Caco-2 (cell line): ENCODE measurements at regions of chr14 and their contacts with region 1.

Region 1: DNA sequence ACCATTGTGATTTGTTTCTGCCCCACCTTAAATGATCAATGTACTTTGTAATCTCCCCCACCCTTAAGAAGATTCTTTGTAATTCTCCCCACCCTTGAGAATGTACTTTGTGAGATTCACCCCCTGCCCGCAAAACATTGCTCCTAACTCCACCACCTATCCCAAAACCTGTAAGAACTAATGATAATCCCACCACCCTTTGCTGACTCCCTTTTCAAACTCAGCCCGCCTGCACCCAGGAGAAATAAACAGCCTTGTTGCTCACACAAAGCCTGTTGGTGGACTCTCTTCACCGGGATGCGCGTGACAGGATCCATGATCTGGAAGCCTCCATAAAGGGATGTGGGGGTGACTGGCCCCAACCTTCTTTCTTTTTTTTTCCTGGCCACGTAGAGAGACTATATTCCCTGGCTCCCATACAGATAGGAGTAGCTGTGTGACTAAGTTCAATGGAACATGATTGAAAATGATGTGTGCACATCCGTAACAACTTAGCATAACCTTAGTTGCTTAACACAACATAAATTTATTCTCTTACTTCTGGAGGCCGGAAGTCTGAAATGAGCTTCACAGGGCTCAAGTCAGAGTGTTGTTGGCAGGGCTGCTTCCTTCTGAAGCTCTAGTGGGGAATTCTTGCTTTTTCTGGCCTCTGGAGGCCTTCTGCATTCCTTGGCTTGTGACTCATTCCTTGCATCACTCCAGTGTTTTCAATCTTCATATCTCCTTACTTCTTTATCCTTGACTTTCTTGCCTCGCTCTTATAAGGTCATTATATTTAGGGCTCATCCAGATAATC is 20.7 kb upstream of the SNX6 start:
- DNase-seq: peak; percentile 74
- H3K4me3 ChIP-seq: no peak overlapping the region
- H3K4me3 Mint-ChIP-seq: peak overlapping the region; percentile 65
- H3K27ac Mint-ChIP-seq: no peak overlapping the region
- H3K4me1 ChIP-seq: peaks cover 42% of the 10 kb centered on the region
- H3K4me1 Mint-ChIP-seq: peaks cover 25% of the 10 kb centered on the region
- H3K27me3 ChIP-seq: no peaks in the 10 kb centered on the region
- H3K27me3 Mint-ChIP-seq: no peaks in the 10 kb centered on the region
- CTCF ChIP-seq: no peak

Region 2: GRCh38 chr14:34403643-34404042 is 247.0 kb before region 1 on chr14:
- CTCF ChIA-PET with region 1: no interaction called
- POLR2A ChIA-PET with region 1: no interaction called
- intact Hi-C with region 1: no loop called
- DNase-seq: no peak
- H3K4me3 ChIP-seq: no peak overlapping the region
- H3K4me3 Mint-ChIP-seq: no peak overlapping the region
- H3K27ac Mint-ChIP-seq: no peak overlapping the region
- H3K4me1 ChIP-seq: no peaks in the 10 kb centered on the region
- H3K4me1 Mint-ChIP-seq: no peaks in the 10 kb centered on the region
- H3K27me3 ChIP-seq: no peaks in the 10 kb centered on the region
- H3K27me3 Mint-ChIP-seq: no peaks in the 10 kb centered on the region
- CTCF ChIP-seq: no peak

Region 3: GRCh38 chr14:34629657-34630529 is 20.7 kb before region 1 on chr14 and contains the start of gene SNX6:
- CTCF ChIA-PET with region 1: no interaction called
- POLR2A ChIA-PET with region 1: interaction called, 8 read pairs
- intact Hi-C with region 1: loop called (anchors 2 kb)
- DNase-seq: peak; percentile 81 to 86
- H3K4me3 ChIP-seq: peak within 1 kb of the TSS; percentile 89
- H3K4me3 Mint-ChIP-seq: peak within 1 kb of the TSS; percentile 99
- H3K27ac Mint-ChIP-seq: peak within 1 kb of the TSS; percentile 77
- H3K4me1 ChIP-seq: peaks cover 6% of the 10 kb centered on the region; the same call in 1 of the 2 replicates
- H3K4me1 Mint-ChIP-seq: no peaks in the 10 kb centered on the region
- H3K27me3 ChIP-seq: no peaks in the 10 kb centered on the region
- H3K27me3 Mint-ChIP-seq: no peaks in the 10 kb centered on the region
- CTCF ChIP-seq: no peak
- total RNA-seq, gene SNX6: 105 and 106 TPM in 2 replicates

Region 4: GRCh38 chr14:34665785-34666435 is 15.3 kb after region 1 on chr14:
- CTCF ChIA-PET with region 1: no interaction called
- POLR2A ChIA-PET with region 1: no interaction called
- intact Hi-C with region 1: no loop called
- DNase-seq: no peak
- H3K4me3 ChIP-seq: no peak overlapping the region
- H3K4me3 Mint-ChIP-seq: no peak overlapping the region
- H3K27ac Mint-ChIP-seq: no peak overlapping the region
- H3K4me1 ChIP-seq: no peaks in the 10 kb centered on the region
- H3K4me1 Mint-ChIP-seq: no peaks in the 10 kb centered on the region
- H3K27me3 ChIP-seq: no peaks in the 10 kb centered on the region
- H3K27me3 Mint-ChIP-seq: no peaks in the 10 kb centered on the region
- CTCF ChIP-seq: no peak